ENCODE measurements at regions of chr9 and their contacts with region 1.

Region 1: DNA sequence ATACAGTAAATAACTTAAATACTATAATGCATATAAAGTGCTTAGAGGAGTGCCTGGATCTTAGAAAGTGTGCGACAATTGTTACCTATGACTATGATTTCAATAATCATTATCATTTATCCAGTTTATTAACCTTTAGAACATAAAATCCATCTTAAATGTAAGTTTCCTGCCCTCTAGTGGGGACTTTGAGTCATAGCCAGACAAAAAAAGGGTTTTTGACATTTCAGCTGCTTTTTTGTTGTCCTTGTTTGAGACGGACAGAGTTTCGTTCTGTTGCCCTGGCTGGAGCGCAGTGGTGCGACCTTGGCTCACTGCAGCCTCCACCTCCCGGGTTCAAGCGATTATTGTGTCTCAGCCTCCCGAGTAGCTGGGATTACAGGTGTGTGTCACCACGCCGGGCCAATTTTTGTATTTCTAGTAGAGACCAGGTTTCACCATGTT is 9.7 kb upstream of the C9orf152 start:
- DNase-seq: peak; percentile 66
- H3K4me3 Mint-ChIP-seq: no peak overlapping the region
- H3K27ac Mint-ChIP-seq: no peak overlapping the region
- H3K4me1 Mint-ChIP-seq: peaks cover 5% of the 10 kb centered on the region
- H3K27me3 Mint-ChIP-seq: peaks cover 35% of the 10 kb centered on the region

Region 2: DNA sequence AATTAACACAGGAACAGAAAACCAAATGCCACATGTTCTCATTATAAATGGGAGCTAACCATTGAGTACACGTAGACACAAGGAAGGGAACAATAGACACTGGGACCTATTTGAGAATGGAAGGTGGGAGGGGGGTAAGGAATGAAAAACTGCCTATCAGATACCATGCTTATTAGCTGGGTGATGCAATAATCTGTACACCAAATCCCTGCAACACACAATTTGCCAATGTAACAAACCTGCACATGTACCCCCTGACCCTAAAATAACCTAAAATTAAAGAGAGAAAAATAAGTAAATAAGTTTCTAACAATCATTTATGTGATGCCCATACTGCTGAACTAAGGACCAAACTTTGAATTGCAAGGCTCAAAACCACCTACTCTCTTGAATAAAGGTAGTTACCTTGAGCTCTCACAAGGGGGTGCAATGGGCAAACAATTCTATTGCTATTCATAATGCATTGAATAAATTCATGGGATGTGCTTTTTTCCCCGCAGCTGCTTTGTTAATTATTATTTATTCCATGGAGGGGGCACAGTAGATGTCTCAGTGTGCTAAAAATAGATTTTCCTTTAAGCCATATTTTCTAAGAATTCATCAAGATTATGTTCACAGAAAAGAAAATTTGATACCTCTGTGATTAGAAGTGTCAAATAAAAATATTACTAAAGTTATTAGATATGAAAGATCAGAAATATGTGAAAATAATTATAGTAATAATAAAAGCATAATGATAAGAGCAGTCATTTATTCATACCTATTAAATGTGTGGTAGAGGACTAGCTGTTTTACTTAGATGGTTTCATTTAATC is 643.4 kb before region 1 on chr9:
- intact Hi-C with region 1: loop called (anchors 5 kb)
- DNase-seq: peak; percentile 79
- H3K4me3 Mint-ChIP-seq: no peak overlapping the region
- H3K27ac Mint-ChIP-seq: no peak overlapping the region
- H3K4me1 Mint-ChIP-seq: no peaks in the 10 kb centered on the region
- H3K27me3 Mint-ChIP-seq: peaks cover 30% of the 10 kb centered on the region

Region 3: GRCh38 chr9:109880277-109881169 is 337.2 kb before region 1 on chr9:
- intact Hi-C with region 1: loop called (anchors 5 kb)
- DNase-seq: peak; percentile 81
- H3K4me3 Mint-ChIP-seq: peak overlapping the region; percentile 69
- H3K27ac Mint-ChIP-seq: no peak overlapping the region
- H3K4me1 Mint-ChIP-seq: peaks cover 29% of the 10 kb centered on the region
- H3K27me3 Mint-ChIP-seq: peaks cover 3% of the 10 kb centered on the region

Region 4: GRCh38 chr9:109903515-109904138 is 314.1 kb before region 1 on chr9:
- intact Hi-C with region 1: loop called (anchors 1 kb)
- DNase-seq: peak; percentile 90
- H3K4me3 Mint-ChIP-seq: no peak overlapping the region
- H3K27ac Mint-ChIP-seq: peak overlapping the region; percentile 23
- H3K4me1 Mint-ChIP-seq: peaks cover 36% of the 10 kb centered on the region
- H3K27me3 Mint-ChIP-seq: no peaks in the 10 kb centered on the region

Region 5: GRCh38 chr9:110088099-110088498 is 129.6 kb before region 1 on chr9:
- intact Hi-C with region 1: no loop called
- DNase-seq: peak; percentile 61
- H3K4me3 Mint-ChIP-seq: no peak overlapping the region
- H3K27ac Mint-ChIP-seq: no peak overlapping the region
- H3K4me1 Mint-ChIP-seq: peaks cover 37% of the 10 kb centered on the region
- H3K27me3 Mint-ChIP-seq: no peaks in the 10 kb centered on the region

Region 6: DNA sequence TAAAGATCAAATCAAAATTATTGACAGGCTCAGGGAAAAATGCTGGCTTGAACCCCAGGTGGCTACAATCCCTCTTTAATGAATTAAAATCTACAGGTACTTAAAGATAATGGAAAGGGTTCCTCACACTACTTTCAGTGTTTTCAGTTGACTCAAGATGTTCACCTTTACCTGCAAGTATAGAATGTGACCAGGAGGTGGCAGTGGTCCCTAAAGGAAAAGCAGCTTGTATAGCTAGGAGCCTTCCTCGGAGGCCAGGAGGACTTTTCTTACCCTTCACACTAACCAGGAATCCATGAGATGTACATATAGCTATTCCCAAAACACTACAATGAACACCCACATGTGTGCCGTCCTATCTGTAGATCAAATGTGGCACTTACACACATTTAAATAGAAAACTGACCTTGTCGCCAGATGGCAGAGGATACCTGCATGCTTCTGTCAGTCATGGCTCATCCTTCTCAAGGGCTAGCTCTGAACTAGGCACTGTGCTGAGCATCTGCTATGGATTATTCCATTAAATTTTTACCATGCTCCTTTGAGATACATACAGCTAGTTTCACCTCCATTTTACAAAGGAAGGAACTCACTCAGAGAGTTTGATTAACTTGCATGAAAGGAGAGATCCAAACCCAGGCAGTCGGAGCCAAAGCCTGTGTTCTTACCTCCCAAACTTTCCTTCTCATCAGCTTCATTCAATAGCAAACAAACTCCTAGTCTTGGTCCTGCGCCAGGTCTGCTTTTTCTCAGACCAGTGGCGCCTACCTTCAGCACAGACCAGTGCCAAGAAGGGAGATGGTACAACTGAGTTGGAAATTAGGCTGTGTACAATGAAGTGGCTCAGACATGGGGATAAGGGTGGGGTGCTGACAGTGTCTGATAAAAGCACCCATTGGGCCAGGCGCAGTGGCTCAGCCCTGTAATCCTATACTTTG is 34.2 kb before region 1 on chr9:
- intact Hi-C with region 1: loop called (anchors 1 kb)
- DNase-seq: peak; percentile 88
- H3K4me3 Mint-ChIP-seq: no peak overlapping the region
- H3K27ac Mint-ChIP-seq: no peak overlapping the region
- H3K4me1 Mint-ChIP-seq: peaks cover 13% of the 10 kb centered on the region
- H3K27me3 Mint-ChIP-seq: peaks cover 5% of the 10 kb centered on the region

Measured in activated CD4-positive, alpha-beta T cell treated with anti-CD3 and anti-CD28 coated beads, Interleukin-2, amount 10 ng/mL, durations not matched to agents 24 days and 14 days (primary cell).